ENCODE measurements at regions of chr1 and their contacts with region 1.

Region 1: GRCh38 chr1:230797942-230798418 is 50.8 kb downstream of the CAPN9 start:
- DNase-seq: peak; percentile 56 to 82
- H3K4me3 ChIP-seq: no peak overlapping the region
- H3K27ac ChIP-seq: no peak overlapping the region
- H3K4me1 ChIP-seq: no peaks in the 10 kb centered on the region
- H3K27me3 ChIP-seq: no peaks in the 10 kb centered on the region
- CTCF ChIP-seq: peak; percentile 88

Region 2: GRCh38 chr1:230899841-230900251 is 101.9 kb after region 1 on chr1:
- intact Hi-C with region 1: no loop called
- DNase-seq: no peak
- H3K4me3 ChIP-seq: no peak overlapping the region
- H3K27ac ChIP-seq: peak overlapping the region in 1 of 2 donors; percentile 58
- H3K4me1 ChIP-seq: peaks cover 0 to 63% (median 6%) of the 10 kb centered on the region in 4 donors
- H3K27me3 ChIP-seq: no peaks in the 10 kb centered on the region
- CTCF ChIP-seq: no peak

Region 3: GRCh38 chr1:230917284-230918135 is 119.5 kb after region 1 on chr1:
- intact Hi-C with region 1: loop called (anchors 2 kb)
- DNase-seq: peak; percentile 71 to 75
- H3K4me3 ChIP-seq: no peak overlapping the region
- H3K27ac ChIP-seq: no peak overlapping the region
- H3K4me1 ChIP-seq: peaks cover 0 to 10% (median 9%) of the 10 kb centered on the region in 4 donors
- H3K27me3 ChIP-seq: no peaks in the 10 kb centered on the region
- CTCF ChIP-seq: peak; percentile 49 to 59

Region 4: GRCh38 chr1:230978491-230979388 is 180.8 kb after region 1 on chr1 and contains the starts of genes ARV1 and TTC13:
- intact Hi-C with region 1: loop called (anchors 5 kb)
- DNase-seq: peak; percentile 99
- H3K4me3 ChIP-seq: peak within 1 kb of the TSS; percentile 85 to 95
- H3K27ac ChIP-seq: peak within 1 kb of the TSS; percentile 65 to 69
- H3K4me1 ChIP-seq: peaks cover 5 to 26% (median 15%) of the 10 kb centered on the region in 4 donors
- H3K27me3 ChIP-seq: no peaks in the 10 kb centered on the region
- CTCF ChIP-seq: peak; percentile 35 to 42

Region 5: GRCh38 chr1:231211005-231211857 is 413.3 kb after region 1 on chr1:
- intact Hi-C with region 1: loop called (anchors 5 kb)
- DNase-seq: peak; percentile 61 to 78
- H3K4me3 ChIP-seq: peak overlapping the region; percentile 34 to 50
- H3K27ac ChIP-seq: no peak overlapping the region
- H3K4me1 ChIP-seq: peaks cover 0 to 6% (median 4%) of the 10 kb centered on the region in 4 donors
- H3K27me3 ChIP-seq: peaks cover 0 to 21% of the 10 kb centered on the region in 2 donors
- CTCF ChIP-seq: peak; percentile 83 to 92

Measured in tibial artery (tissue), 4 donors.